Activated CD4-positive, alpha-beta memory T cell treated with anti-CD3 and anti-CD28 coated beads for 36 hours (primary cell): ENCODE measurements at regions of chr9 and their contacts with region 1.

Region 1: DNA sequence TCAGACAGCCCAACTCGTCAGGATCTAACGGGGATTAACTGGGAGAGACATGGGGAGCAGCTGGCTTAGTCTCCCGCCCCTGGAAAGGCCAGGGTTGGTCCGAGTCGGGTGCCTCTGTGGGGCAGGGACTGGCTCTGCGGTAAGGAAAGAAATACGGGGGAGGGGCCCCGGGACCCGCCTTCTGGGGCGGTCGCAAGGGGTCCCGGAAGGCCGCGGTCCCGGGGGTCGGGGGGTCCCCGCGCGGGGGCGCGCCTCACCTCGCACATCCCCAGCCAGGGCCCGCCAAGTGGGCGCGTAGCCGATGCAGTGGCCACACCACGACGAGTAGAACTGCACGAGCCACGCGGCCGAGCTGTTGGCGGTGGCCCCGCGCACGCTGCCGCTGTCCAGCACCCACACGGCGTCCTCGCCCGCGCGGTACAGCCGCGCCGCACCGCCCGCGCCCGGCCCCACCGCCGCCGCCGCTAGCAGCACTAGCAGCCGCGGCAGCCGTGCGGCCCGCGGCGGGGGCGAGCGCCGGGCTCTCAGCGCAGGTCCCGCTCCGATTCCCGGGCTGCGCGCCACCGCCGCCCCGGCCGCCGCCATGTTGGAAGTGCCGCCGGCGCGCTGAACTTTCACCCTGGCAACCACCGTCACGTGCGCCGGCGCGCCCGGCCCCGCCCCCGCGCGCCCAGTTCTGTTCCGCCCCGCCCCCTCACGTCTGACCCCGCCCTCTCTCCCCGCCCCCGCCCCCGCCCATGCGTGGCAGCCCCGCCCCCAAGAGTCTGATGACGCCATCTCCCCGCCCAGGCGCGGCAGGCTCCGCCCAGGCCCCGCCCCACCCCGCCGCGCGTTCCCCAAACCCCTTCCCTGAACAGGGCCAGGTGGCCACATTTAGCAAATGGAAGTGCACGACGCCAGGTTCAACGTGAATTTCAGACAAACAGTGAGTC is at the start of gene QSOX2:
- DNase-seq: peak; percentile 89
- H3K4me3 Mint-ChIP-seq: peak within 1 kb of the TSS; percentile 89
- H3K27ac Mint-ChIP-seq: peak within 1 kb of the TSS; percentile 92
- H3K4me1 Mint-ChIP-seq: peaks cover 35% of the 10 kb centered on the region
- H3K27me3 Mint-ChIP-seq: no peaks in the 10 kb centered on the region
- total RNA-seq, gene QSOX2: 19.0 to 19.4 TPM

Region 2: GRCh38 chr9:135961277-135961705 is 284.2 kb before region 1 on chr9 and contains the start of gene UBAC1:
- CTCF ChIA-PET with region 1: no interaction called
- POLR2A ChIA-PET with region 1: no interaction called
- intact Hi-C with region 1: loop called (anchors 10 kb)
- DNase-seq: peak; percentile 96
- H3K4me3 Mint-ChIP-seq: peak within 1 kb of the TSS; percentile 87
- H3K27ac Mint-ChIP-seq: peak within 1 kb of the TSS; percentile 66
- H3K4me1 Mint-ChIP-seq: peaks cover 35% of the 10 kb centered on the region
- H3K27me3 Mint-ChIP-seq: peaks cover 1% of the 10 kb centered on the region
- total RNA-seq, gene UBAC1: 41.3 to 42.0 TPM

Region 3: DNA sequence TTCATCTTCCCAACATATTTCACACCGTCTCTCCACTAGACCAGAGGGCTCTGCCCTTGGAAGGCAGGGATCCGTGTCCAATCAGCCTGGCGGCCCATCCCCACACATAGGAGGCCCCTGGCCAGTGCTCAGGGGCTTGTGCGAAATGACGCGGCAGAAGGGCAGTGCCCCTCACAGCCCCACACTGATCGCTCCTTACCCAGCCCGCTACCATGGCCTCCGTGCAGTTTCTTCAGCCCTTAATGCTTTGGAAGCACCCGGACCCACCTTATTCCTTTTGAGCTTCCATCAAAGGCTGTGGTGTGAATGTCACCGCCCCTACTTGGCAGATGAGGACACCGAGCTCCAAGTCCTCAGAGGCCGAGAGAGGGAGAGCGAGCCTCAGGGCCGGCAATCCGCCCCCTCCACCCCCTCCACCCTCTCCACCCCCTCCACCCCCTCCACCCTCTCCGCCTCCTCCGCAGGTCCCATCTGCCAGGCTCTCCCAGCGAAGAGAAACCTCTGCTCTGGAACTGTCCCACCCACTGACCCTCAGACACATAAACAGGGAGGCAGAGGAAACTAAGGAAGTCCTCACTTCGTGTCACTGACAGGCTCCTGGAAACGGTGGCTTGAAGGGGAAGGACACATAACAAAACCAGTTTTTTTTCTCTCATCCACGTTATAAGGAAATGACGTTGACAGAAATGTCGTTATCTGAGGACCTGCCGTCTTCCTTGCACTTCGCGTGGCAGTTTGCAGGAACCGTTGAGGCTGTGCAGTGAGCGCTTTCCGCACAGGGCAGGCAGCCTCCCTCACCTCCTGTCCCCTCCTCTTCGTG is 13.8 kb before region 1 on chr9:
- CTCF ChIA-PET with region 1: interaction called, 6 read pairs
- POLR2A ChIA-PET with region 1: no interaction called
- intact Hi-C with region 1: loop called (anchors 1 kb)
- DNase-seq: peak; percentile 57
- H3K4me3 Mint-ChIP-seq: peak overlapping the region; percentile 43
- H3K27ac Mint-ChIP-seq: peak overlapping the region; percentile 82
- H3K4me1 Mint-ChIP-seq: peaks cover 33% of the 10 kb centered on the region
- H3K27me3 Mint-ChIP-seq: no peaks in the 10 kb centered on the region

Region 4: GRCh38 chr9:136400038-136400834 is 154.8 kb after region 1 on chr9 and contains the start of gene SNAPC4:
- CTCF ChIA-PET with region 1: no interaction called
- POLR2A ChIA-PET with region 1: no interaction called
- intact Hi-C with region 1: loop called (anchors 2 kb)
- DNase-seq: peak; percentile 91
- H3K4me3 Mint-ChIP-seq: peak within 1 kb of the TSS; percentile 83
- H3K27ac Mint-ChIP-seq: peak within 1 kb of the TSS; percentile 76
- H3K4me1 Mint-ChIP-seq: peaks cover 50% of the 10 kb centered on the region
- H3K27me3 Mint-ChIP-seq: no peaks in the 10 kb centered on the region
- total RNA-seq, gene SNAPC4: 13.9 to 14.3 TPM

Region 5: GRCh38 chr9:137605121-137606004 is 1359.9 kb after region 1 on chr9 and contains the start of gene ARRDC1:
- CTCF ChIA-PET with region 1: no interaction called
- POLR2A ChIA-PET with region 1: no interaction called
- intact Hi-C with region 1: loop called (anchors 10 kb)
- DNase-seq: peak; percentile 96
- H3K4me3 Mint-ChIP-seq: peak within 1 kb of the TSS; percentile 78
- H3K27ac Mint-ChIP-seq: no peak within 1 kb of the TSS
- H3K4me1 Mint-ChIP-seq: peaks cover 20% of the 10 kb centered on the region
- H3K27me3 Mint-ChIP-seq: no peaks in the 10 kb centered on the region
- total RNA-seq, gene ARRDC1: 38.2 to 40.5 TPM